Activated B cell treated with CpG ODN at 0.5 μM for 24 hours (primary cell): ENCODE measurements at regions of chr2 and their contacts with region 1.

Region 1: DNA sequence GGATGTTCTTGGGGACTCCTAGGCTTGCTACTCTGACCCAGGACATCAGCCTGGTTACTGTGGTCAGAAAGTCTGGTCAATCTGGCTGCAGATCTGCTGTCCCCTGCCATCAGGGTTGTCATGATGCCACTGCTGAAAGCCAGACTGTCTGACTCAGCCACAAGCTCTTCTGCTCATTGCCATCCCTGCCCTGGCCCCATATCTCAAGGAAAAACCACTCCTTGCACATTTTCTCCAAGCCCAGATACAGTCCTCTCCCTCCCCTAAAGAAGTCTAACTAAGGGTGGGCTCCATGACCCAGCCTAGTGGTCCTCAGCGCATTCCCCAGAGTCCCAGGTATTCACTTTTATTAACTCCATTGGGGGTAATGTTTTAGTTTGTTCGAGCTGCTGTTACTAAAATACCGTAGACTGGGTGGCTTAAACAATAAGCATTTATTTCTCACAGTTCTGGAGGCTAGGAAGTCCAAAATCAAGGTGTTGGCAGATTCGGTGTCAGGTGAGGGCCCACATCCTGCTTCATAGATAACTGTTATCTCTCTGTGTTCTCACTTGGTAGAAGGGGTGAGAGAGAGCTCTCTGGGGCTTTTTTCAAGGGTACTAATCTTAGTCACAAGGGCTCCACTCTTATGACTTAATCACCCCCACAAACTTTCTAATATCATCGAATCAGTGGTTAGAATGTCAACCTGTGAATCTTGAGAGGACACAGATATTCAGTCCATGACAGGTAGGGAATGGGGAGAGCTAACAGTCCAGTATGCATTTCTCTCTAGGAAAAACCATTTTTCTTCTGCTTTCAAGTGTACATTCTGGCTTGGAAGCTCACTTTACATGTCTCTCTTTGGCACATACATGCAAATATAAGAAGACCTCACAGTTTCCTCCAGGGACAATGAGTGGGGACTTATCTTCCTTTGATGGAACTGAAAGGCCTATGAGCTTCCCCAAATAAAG is 94.8 kb upstream of the CXCR4 start:
- DNase-seq: no peak
- ATAC-seq: peak; percentile 72
- H3K4me3 Mint-ChIP-seq: peak overlapping the region; percentile 64
- H3K27ac Mint-ChIP-seq: peak overlapping the region; percentile 97
- H3K4me1 Mint-ChIP-seq: peaks cover 97% of the 10 kb centered on the region
- H3K27me3 Mint-ChIP-seq: no peaks in the 10 kb centered on the region
- CTCF ChIP-seq: no peak

Region 2: DNA sequence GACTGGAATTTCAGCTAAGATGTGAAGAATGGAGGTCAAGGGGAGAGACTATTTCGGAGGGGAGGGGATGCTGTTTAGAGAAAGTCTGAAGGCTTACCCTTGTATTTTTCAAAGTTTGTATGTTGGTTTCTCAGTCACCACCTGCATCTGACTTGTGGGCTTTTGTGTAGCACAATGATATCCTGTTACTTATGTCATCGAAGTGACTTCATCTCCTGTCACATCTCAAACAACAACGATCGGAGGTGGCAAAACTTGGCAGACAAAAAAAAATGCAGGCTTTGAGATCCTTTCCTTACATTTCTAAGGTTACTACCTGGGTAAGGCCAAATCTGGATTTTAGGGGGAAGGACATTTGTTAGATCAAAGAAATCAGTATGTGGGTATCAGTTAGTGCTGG is 83.1 kb before region 1 on chr2:
- CTCF ChIA-PET with region 1: interaction called, 20 read pairs
- POLR2A ChIA-PET with region 1: interaction called, 248 read pairs
- intact Hi-C with region 1: loop called (anchors 1 kb)
- DNase-seq: no peak
- ATAC-seq: no peak
- H3K4me3 Mint-ChIP-seq: peak overlapping the region; percentile 73
- H3K27ac Mint-ChIP-seq: peak overlapping the region; percentile 99
- H3K4me1 Mint-ChIP-seq: peaks cover 99% of the 10 kb centered on the region
- H3K27me3 Mint-ChIP-seq: no peaks in the 10 kb centered on the region
- CTCF ChIP-seq: no peak

Region 3: DNA sequence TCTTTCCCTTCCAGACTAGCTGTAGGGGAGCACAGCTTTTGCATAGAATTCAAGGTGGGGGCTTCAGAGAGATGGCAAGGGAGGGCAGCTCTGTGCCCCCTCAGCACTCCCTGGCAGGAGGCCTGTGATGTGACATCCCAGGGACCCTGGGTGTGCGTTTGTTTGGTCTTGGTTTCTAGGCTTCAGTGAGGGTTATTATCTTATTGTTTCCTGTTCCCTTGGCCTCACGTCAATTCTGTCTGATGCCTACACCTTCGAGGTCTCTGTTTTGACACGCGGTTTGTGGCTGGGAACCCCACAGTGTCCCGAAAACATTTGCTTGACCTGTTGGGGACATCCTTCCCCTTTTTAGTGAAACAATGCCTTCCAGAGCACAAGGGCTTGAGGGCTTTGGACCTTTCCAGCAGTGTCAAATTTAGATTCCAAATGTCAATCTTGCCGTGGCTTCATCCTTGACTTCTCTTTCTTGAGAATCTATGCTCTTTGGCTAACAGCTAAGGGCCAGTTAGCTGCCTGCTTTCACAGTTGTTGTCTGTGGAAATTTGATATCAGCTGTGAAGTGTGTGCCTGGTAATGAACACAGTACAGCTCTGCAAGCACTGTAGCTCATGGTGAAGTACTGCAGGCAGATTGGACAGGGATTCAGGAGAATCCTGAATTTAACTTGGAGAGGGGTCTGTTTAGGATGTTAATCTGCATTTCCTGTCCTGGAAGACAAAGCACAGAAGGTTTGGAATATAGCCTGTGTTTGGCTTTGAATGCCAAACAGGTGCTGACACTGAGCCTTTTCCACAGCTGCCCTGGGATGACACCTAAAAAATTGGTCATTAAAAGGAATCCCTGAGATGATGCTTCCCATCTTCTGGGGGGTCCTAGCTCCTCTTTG is 13.5 kb after region 1 on chr2:
- CTCF ChIA-PET with region 1: interaction called, 4 read pairs
- POLR2A ChIA-PET with region 1: interaction called, 46 read pairs
- intact Hi-C with region 1: loop called (anchors 1 kb)
- DNase-seq: no peak
- ATAC-seq: peak; percentile 77
- H3K4me3 Mint-ChIP-seq: peak overlapping the region; percentile 2
- H3K27ac Mint-ChIP-seq: peak overlapping the region; percentile 87
- H3K4me1 Mint-ChIP-seq: peaks cover 67% of the 10 kb centered on the region
- H3K27me3 Mint-ChIP-seq: no peaks in the 10 kb centered on the region
- CTCF ChIP-seq: no peak